ENCODE measurements at regions of chr10 and their contacts with region 1.

Region 1: DNA sequence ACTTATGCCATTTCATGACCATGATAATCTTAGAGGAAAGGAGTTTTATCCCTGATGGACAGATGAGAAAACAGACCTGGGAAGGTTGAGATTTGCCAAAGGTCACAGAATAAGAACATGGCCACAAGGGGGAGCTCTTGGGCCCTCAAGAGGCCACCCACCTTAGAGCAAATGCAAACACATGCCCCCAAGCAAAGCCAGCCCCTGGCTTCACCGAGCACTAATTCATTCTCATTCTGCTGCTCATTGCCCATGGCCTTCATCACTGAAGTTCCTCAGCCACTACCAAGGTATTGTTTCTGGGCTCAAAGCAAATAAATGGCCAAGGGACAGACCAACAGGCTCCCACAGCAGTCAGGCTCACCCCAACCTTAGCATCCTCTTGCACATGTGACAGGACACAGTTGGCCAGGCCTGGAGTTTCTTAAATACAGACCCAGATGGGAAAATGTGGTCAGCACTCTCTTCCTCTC is 44.2 kb downstream of the PDLIM1 start:
- DNase-seq: peak; percentile 82
- ATAC-seq: peak; percentile 64

Region 2: DNA sequence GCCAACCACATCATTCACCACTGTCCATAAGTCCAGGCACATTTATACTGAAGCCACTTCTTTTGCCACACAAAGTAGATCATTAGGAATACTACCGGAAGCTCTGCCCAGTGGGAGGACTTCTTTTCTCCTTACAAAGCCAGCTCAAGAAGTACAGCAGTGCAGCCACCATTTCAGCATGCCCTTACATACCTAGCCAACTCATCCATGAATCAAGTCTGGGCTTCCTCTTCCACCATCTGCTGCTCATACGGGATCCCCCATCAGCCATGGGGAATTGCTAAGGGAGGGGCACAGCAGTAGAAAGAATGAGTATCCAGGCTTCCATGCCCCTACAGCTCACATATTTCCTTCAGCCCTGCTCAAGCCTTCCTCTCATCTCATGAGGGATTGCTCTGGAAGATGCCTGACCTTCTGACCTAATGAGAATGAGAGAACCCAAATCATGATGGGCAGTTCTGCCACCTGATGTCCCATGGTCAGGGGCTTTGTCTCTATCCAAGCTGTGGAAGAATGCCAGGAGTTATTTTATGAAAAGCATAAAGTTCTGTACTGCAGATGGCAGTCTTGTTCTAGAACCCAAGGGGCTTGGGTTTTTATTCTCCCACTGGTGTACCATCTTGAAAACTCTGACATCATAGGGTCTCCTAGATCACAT is 13.1 kb before region 1 on chr10:
- intact Hi-C with region 1: loop called (anchors 1 kb)
- DNase-seq: no peak
- ATAC-seq: no peak

Region 3: GRCh38 chr10:95374597-95375209 is 128.1 kb after region 1 on chr10:
- intact Hi-C with region 1: loop called (anchors 5 kb)
- DNase-seq: peak; percentile 87
- ATAC-seq: peak; percentile 86